ENCODE measurements at regions of chr13 and their contacts with region 1.

Region 1: DNA sequence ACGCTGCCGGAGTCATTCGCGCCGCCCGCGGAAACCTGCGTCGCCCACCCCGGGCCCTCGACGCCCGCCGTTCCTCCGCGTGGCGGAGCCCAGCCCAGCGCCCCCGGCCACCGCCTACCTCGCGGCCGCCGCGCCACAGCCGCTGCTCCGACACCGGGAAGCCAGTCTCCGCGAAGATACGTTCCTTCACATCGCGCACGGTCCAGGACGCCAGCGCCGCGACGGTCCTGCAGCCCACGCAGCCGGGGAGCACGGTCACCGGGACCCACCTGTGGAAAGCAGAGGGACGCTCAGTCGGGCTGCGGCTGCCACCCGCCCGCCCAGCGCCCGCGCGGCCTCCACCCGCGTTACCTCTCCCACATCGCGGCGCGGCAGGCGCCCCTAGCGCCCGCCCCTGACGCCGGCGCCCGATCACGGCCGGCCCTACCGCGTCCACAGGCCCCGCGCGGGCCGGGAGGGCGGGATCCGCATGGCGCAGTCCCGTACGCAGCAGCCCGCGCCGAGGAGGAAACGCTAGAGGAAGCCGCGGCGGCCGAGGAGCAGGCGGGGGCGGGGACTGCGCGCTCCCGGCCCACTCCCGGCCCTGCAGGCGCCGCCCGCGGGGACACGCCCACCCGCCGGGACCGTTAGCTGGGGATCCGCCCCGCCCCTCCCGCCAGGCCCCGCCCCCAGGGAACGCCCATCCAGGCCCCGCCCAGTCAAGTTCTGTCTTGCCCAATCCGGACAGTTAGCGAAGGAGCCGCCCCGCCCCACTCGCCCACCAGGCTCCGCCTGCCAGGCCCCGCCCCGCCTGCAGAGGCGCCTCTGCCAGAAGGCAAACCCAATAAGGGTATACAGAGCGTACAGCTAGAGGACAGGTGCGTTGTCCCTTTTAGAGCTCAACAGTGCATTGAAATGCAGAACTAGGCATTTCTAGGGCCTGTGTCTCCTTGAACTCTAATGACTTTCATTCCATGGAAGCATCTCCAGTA is 58.2 kb downstream of the SACS start:
- DNase-seq: peak; percentile 87
- ATAC-seq: peak; percentile 91
- H3K4me3 ChIP-seq: peak overlapping the region; percentile 90
- H3K27ac ChIP-seq: peak overlapping the region; percentile 24; the same call in 1 of the 2 replicates
- H3K4me1 ChIP-seq: peaks cover 41% of the 10 kb centered on the region
- H3K27me3 ChIP-seq: no peaks in the 10 kb centered on the region
- CTCF ChIP-seq: no peak

Region 2: GRCh38 chr13:23427342-23427843 is 52.1 kb after region 1 on chr13:
- CTCF ChIA-PET with region 1: no interaction called
- POLR2A ChIA-PET with region 1: no interaction called
- intact Hi-C with region 1: loop called (anchors 5 kb)
- DNase-seq: peak; percentile 92
- ATAC-seq: peak; percentile 97
- H3K4me3 ChIP-seq: peak overlapping the region; percentile 23; the same call in 1 of the 2 replicates
- H3K27ac ChIP-seq: peak overlapping the region; percentile 83
- H3K4me1 ChIP-seq: peaks cover 20% of the 10 kb centered on the region
- H3K27me3 ChIP-seq: no peaks in the 10 kb centered on the region
- CTCF ChIP-seq: no peak

Region 3: DNA sequence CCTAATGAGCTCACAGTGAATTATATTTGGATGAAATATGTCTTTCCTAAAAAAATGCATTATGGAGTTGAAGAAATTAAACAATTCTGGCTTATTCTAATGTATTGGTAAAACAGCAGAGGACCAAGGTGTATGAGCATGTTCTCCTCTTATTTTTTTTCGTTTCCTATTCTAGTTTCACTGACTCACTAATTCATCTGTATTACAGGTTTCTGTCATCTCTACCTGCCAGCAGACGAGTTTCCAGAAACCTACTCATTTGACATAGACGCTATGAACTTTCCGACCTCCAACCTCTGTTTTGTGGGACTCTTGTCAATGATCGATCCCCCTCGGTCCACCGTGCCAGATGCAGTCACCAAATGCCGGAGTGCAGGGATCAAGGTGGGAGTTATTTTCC is 1325.3 kb after region 1 on chr13:
- CTCF ChIA-PET with region 1: no interaction called
- POLR2A ChIA-PET with region 1: no interaction called
- intact Hi-C with region 1: no loop called
- DNase-seq: no peak
- ATAC-seq: no peak
- H3K4me3 ChIP-seq: no peak overlapping the region
- H3K27ac ChIP-seq: no peak overlapping the region
- H3K4me1 ChIP-seq: no peaks in the 10 kb centered on the region
- H3K27me3 ChIP-seq: peaks cover 56% of the 10 kb centered on the region
- CTCF ChIP-seq: no peak

Measured in PC-3 (cell line).